Prostate gland (tissue), 2 donors: ENCODE measurements at regions of chr6 and their contacts with region 1.

Region 1: GRCh38 chr6:157667211-157668008 is 155.6 kb upstream of the SNX9 start:
- DNase-seq: peak; percentile 57
- H3K4me3 ChIP-seq: no peak overlapping the region
- H3K27ac ChIP-seq: no peak overlapping the region
- H3K4me1 ChIP-seq: no peaks in the 10 kb centered on the region
- H3K27me3 ChIP-seq: no peaks in the 10 kb centered on the region
- CTCF ChIP-seq: peak; percentile 72 to 82 (median 81)
- POLR2A ChIP-seq: no peak

Region 2: GRCh38 chr6:157314705-157315321 is 352.6 kb before region 1 on chr6:
- intact Hi-C with region 1: loop called (anchors 2 kb)
- DNase-seq: peak; percentile 31
- H3K4me3 ChIP-seq: no peak overlapping the region
- H3K27ac ChIP-seq: no peak overlapping the region
- H3K4me1 ChIP-seq: no peaks in the 10 kb centered on the region
- H3K27me3 ChIP-seq: no peaks in the 10 kb centered on the region
- CTCF ChIP-seq: peak; percentile 53 to 98 (median 93)
- POLR2A ChIP-seq: no peak

Region 3: GRCh38 chr6:157456524-157457082 is 210.8 kb before region 1 on chr6:
- intact Hi-C with region 1: no loop called
- DNase-seq: no peak
- H3K4me3 ChIP-seq: no peak overlapping the region
- H3K27ac ChIP-seq: peak overlapping the region; percentile 16 to 26
- H3K4me1 ChIP-seq: peaks cover 7% of the 10 kb centered on the region
- H3K27me3 ChIP-seq: no peaks in the 10 kb centered on the region
- CTCF ChIP-seq: no peak
- POLR2A ChIP-seq: no peak

Region 4: GRCh38 chr6:157471895-157472686 is 195.3 kb before region 1 on chr6:
- intact Hi-C with region 1: no loop called
- DNase-seq: no peak
- H3K4me3 ChIP-seq: no peak overlapping the region
- H3K27ac ChIP-seq: no peak overlapping the region
- H3K4me1 ChIP-seq: no peaks in the 10 kb centered on the region
- H3K27me3 ChIP-seq: no peaks in the 10 kb centered on the region
- CTCF ChIP-seq: no peak
- POLR2A ChIP-seq: no peak

Region 5: DNA sequence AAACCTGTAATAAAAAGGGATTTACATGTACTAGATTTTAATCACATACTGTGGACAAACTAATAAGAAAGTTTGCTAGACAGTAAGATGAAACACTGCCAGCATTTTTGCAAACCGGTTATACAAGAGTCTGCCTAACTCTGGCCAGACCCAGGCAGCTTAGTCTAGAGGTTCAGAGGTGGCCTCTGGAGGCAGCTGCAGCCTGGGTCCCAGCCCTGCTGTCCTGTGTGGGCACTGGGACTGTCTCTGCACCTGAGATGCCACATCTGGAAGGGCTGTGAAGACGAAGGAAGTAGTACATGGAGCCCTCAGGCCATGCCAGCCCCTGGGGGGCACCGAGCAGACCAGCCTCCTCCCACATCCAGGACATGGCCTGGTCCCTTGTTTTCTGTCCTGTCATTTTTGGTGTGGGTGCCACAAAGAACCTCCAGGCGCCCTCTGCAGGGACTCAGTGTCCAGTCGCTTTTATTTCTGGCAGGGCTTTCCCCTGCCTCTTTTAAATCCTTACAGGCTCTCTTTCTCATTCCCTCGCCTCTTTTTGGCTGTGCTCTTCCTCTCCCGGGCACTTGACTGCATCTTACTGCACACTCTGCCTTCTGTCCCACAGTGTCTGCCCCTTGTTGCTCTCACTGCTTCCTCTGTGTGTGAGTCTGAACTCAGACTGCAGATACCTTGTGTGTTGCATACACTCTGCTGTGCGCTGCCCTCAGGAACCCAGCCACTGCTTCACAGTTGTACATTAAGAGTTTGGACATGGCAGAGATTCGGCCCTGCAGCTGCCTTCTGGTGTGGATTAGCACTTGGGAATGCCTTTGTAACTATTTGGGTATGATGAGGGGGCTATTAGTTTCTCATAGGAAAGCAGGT is 69.7 kb before region 1 on chr6:
- intact Hi-C with region 1: loop called (anchors 5 kb)
- DNase-seq: peak; percentile 94
- H3K4me3 ChIP-seq: peak overlapping the region in 1 of 2 donors; percentile 5
- H3K27ac ChIP-seq: peak overlapping the region; percentile 76 to 81
- H3K4me1 ChIP-seq: peaks cover 16% of the 10 kb centered on the region
- H3K27me3 ChIP-seq: no peaks in the 10 kb centered on the region
- CTCF ChIP-seq: peak in 3 of 4 experiments; percentile 50 to 67 (median 62)
- POLR2A ChIP-seq: no peak

Region 6: DNA sequence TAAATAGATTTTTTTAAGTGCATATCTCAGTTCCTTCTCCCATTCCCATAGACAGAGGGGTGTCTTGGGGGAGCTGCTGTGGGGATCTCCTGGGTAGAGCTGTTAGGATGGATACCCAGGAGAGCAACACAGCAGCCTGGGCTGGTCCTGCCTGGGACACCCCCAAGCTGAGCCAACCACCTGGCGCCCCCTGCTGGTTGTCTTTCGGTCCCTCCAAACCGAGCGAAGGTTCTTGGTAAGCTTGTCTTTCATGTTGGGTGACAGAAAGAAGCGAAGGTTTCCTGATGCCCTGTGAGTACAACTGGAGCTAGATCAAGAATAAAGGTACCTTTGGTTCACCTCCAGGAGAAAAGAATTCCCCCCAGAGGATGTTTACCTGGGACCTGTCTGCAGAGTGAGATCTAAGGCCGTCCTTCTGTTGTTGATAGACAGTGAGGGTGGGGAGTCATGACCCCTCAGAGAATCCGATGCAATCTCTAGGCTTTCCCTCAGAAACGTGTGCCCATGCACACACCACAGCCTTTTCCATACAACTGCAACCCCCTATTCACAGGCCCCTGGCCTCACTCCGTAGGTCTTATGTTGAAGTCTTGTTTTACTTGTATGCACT is 206.4 kb after region 1 on chr6:
- intact Hi-C with region 1: loop called (anchors 10 kb)
- DNase-seq: peak; percentile 68
- H3K4me3 ChIP-seq: no peak overlapping the region
- H3K27ac ChIP-seq: no peak overlapping the region
- H3K4me1 ChIP-seq: no peaks in the 10 kb centered on the region
- H3K27me3 ChIP-seq: no peaks in the 10 kb centered on the region
- CTCF ChIP-seq: peak; percentile 54 to 82 (median 72)
- POLR2A ChIP-seq: no peak